K562 (cell line): ENCODE measurements at regions of chr14 and their contacts with region 1.

Region 1: GRCh38 chr14:77067632-77068514 is 30.2 kb upstream of the CIPC start:
- DNase-seq: peak; percentile 47 to 61 (median 53)
- ATAC-seq: peak; percentile 88
- H3K4me3 ChIP-seq: no peak overlapping the region
- H3K27ac ChIP-seq: no peak overlapping the region
- H3K4me1 ChIP-seq: peaks cover 0 to 8% of the 10 kb centered on the region in 2 experiments; a peak in 3 of 5 replicates
- H3K27me3 ChIP-seq: peaks cover 0 to 12% of the 10 kb centered on the region in 2 experiments; a peak in 2 of 5 replicates
- CTCF ChIP-seq: peak; percentile 75 to 81 (median 76)
- EP300 ChIP-seq: no peak
- POLR2A ChIP-seq: no peak
- RAD21 ChIP-seq: peak; percentile 74 to 91

Region 2: DNA sequence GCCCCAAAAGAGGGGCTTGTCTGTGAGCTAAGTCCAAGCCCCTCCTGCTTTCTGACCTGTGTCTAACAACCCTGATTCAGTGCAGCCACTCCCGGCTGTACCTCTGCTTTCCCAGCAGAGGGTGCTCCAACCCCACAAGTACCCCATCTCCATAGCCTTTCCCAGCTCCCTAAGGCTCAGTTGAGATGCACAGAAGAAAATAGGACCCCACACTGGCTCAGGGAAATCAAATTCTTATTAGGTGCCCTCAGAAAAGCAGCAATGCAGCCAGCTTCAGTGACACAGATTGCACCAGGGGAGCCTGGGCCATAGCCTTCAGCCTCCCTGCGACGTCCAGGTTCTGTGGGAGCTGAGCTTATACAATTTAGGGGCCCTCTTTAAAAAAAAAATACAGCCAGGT is 191.8 kb before region 1 on chr14:
- CTCF ChIA-PET with region 1: interaction called, 57 read pairs
- POLR2A ChIA-PET with region 1: interaction called, 3 read pairs
- in situ Hi-C with region 1: loop called (anchors 5 kb)
- intact Hi-C with region 1: loop called (anchors 1 kb)
- DNase-seq: peak; percentile 61 to 68 (median 62)
- ATAC-seq: peak; percentile 91
- H3K4me3 ChIP-seq: no peak overlapping the region
- H3K27ac ChIP-seq: no peak overlapping the region
- H3K4me1 ChIP-seq: no peaks in the 10 kb centered on the region
- H3K27me3 ChIP-seq: peaks cover 0 to 32% of the 10 kb centered on the region in 2 experiments; a peak in 2 of 5 replicates
- CTCF ChIP-seq: peak; percentile 77 to 89 (median 80)
- EP300 ChIP-seq: no peak
- POLR2A ChIP-seq: no peak
- RAD21 ChIP-seq: peak; percentile 92 to 95

Region 3: GRCh38 chr14:76918751-76919543 is 148.9 kb before region 1 on chr14:
- CTCF ChIA-PET with region 1: interaction called, 56 read pairs
- POLR2A ChIA-PET with region 1: interaction called, 3 read pairs
- in situ Hi-C with region 1: no loop called
- intact Hi-C with region 1: no loop called
- DNase-seq: peak; percentile 80 to 84 (median 81)
- ATAC-seq: peak; percentile 94
- H3K4me3 ChIP-seq: no peak overlapping the region
- H3K27ac ChIP-seq: peak overlapping the region; percentile 62; the same call in 2 of the 3 replicates
- H3K4me1 ChIP-seq: peaks cover 28 to 41% of the 10 kb centered on the region in 2 experiments
- H3K27me3 ChIP-seq: no peaks in the 10 kb centered on the region
- CTCF ChIP-seq: 0 out of 6 replicates have a peak, but pooled peaks of 1 of the 3 experiments have one; percentile 3
- EP300 ChIP-seq: peak; percentile 15; the same call in 1 of the 2 replicates
- POLR2A ChIP-seq: no peak
- RAD21 ChIP-seq: no peak

Region 4: GRCh38 chr14:77023001-77023996 is 44.6 kb before region 1 on chr14:
- CTCF ChIA-PET with region 1: no interaction called
- POLR2A ChIA-PET with region 1: no interaction called
- in situ Hi-C with region 1: no loop called
- intact Hi-C with region 1: no loop called
- DNase-seq: no peak
- ATAC-seq: 0 out of 3 replicates have a peak, but pooled peaks have one; percentile 13
- H3K4me3 ChIP-seq: no peak overlapping the region
- H3K27ac ChIP-seq: peak overlapping the region; percentile 61; the same call in 1 of the 3 replicates
- H3K4me1 ChIP-seq: peaks cover 21 to 47% of the 10 kb centered on the region in 2 experiments
- H3K27me3 ChIP-seq: no peaks in the 10 kb centered on the region
- CTCF ChIP-seq: peak in 1 of 3 experiments; percentile 13; a peak in 1 of 6 replicates
- EP300 ChIP-seq: no peak
- POLR2A ChIP-seq: no peak
- RAD21 ChIP-seq: peak in 1 of 2 experiments; percentile 31; a peak in 2 of 4 replicates

Region 5: GRCh38 chr14:77097700-77098528 is 30.0 kb after region 1 on chr14 and contains the start of gene CIPC:
- CTCF ChIA-PET with region 1: interaction called, 4 read pairs
- POLR2A ChIA-PET with region 1: interaction called, 3 read pairs
- in situ Hi-C with region 1: no loop called
- intact Hi-C with region 1: loop called (anchors 2 kb)
- DNase-seq: peak; percentile 92 to 96 (median 94)
- ATAC-seq: peak; percentile 93
- H3K4me3 ChIP-seq: peak within 1 kb of the TSS; percentile 82
- H3K27ac ChIP-seq: peak within 1 kb of the TSS; percentile 95
- H3K4me1 ChIP-seq: peaks cover 9 to 13% of the 10 kb centered on the region in 2 experiments; a peak in 4 of 5 replicates
- H3K27me3 ChIP-seq: no peaks in the 10 kb centered on the region
- CTCF ChIP-seq: no peak
- EP300 ChIP-seq: peak; percentile 23; the same call in 1 of the 2 replicates
- POLR2A ChIP-seq: peak; percentile 71
- RAD21 ChIP-seq: no peak
- polyA plus RNA-seq, gene CIPC: 5.0 to 6.5 TPM

Region 6: GRCh38 chr14:78254911-78255461 is 1187.1 kb after region 1 on chr14:
- CTCF ChIA-PET with region 1: no interaction called
- POLR2A ChIA-PET with region 1: no interaction called
- in situ Hi-C with region 1: no loop called
- intact Hi-C with region 1: no loop called
- DNase-seq: no peak
- ATAC-seq: no peak
- H3K4me3 ChIP-seq: no peak overlapping the region
- H3K27ac ChIP-seq: no peak overlapping the region
- H3K4me1 ChIP-seq: no peaks in the 10 kb centered on the region
- H3K27me3 ChIP-seq: no peaks in the 10 kb centered on the region
- CTCF ChIP-seq: no peak
- EP300 ChIP-seq: no peak
- POLR2A ChIP-seq: no peak
- RAD21 ChIP-seq: no peak